ENCODE measurements at regions of chr6 and their contacts with region 1.

Region 1: GRCh38 chr6:39923414-39923813 is 10.8 kb downstream of the MOCS1 start:
- DNase-seq: no peak
- ATAC-seq: no peak
- H3K4me3 ChIP-seq: no peak overlapping the region
- H3K27ac ChIP-seq: no peak overlapping the region
- H3K4me1 ChIP-seq: no peaks in the 10 kb centered on the region
- H3K27me3 ChIP-seq: no peaks in the 10 kb centered on the region
- CTCF ChIP-seq: no peak

Region 2: DNA sequence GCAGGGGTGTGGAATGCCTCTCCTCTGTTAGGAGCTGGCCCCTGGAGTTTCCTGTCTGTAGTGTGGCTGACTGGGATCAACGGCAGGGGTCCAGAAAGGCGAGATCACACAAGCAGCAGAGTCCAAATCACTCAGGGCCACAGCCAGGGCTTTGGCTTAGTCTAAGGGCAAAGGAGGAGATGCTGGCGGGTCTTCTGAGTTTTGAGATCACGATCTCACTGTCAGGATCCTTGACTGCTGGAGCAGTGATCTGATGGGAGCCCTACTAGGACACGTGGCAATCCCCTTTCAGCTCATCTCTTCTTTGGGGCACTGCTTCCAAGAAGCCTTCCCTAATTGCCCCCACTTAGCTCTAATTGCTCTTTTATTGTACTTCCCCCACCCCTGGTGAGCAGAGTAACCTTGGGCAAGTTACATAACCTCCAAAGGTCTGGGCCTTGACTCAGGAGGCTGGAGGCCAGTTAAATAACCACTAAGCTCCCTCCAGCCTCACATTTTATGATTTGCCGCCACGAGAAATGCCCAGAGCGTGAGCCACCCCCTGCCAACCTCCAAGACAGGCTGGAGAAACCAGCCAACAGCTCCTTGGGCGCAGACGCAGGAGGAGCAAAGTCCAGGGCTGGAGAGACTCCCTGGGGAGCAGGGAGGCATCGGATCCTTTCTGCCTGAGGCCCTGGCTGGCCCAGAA is 706.1 kb before region 1 on chr6:
- CTCF ChIA-PET with region 1: interaction called, 13 read pairs
- POLR2A ChIA-PET with region 1: no interaction called
- in situ Hi-C with region 1: no loop called
- intact Hi-C with region 1: no loop called
- DNase-seq: no peak
- ATAC-seq: no peak
- H3K4me3 ChIP-seq: no peak overlapping the region
- H3K27ac ChIP-seq: no peak overlapping the region
- H3K4me1 ChIP-seq: no peaks in the 10 kb centered on the region
- H3K27me3 ChIP-seq: no peaks in the 10 kb centered on the region
- CTCF ChIP-seq: no peak